ENCODE measurements at regions of chr17 and their contacts with region 1.

Region 1: GRCh38 chr17:61461967-61462718 is 9.9 kb downstream of the TBX4 start:
- DNase-seq: no peak
- H3K4me3 ChIP-seq: peak overlapping the region; percentile 31
- H3K27ac ChIP-seq: no peak overlapping the region
- H3K4me1 ChIP-seq: peaks cover 4% of the 10 kb centered on the region
- H3K27me3 ChIP-seq: peaks cover 25% of the 10 kb centered on the region
- CTCF ChIP-seq: no peak

Region 2: GRCh38 chr17:60398227-60398959 is 1063.8 kb before region 1 on chr17:
- CTCF ChIA-PET with region 1: no interaction called
- POLR2A ChIA-PET with region 1: interaction called, 10 read pairs
- intact Hi-C with region 1: no loop called
- DNase-seq: no peak
- H3K4me3 ChIP-seq: no peak overlapping the region
- H3K27ac ChIP-seq: no peak overlapping the region
- H3K4me1 ChIP-seq: peaks cover 15% of the 10 kb centered on the region
- H3K27me3 ChIP-seq: no peaks in the 10 kb centered on the region
- CTCF ChIP-seq: no peak

Region 3: DNA sequence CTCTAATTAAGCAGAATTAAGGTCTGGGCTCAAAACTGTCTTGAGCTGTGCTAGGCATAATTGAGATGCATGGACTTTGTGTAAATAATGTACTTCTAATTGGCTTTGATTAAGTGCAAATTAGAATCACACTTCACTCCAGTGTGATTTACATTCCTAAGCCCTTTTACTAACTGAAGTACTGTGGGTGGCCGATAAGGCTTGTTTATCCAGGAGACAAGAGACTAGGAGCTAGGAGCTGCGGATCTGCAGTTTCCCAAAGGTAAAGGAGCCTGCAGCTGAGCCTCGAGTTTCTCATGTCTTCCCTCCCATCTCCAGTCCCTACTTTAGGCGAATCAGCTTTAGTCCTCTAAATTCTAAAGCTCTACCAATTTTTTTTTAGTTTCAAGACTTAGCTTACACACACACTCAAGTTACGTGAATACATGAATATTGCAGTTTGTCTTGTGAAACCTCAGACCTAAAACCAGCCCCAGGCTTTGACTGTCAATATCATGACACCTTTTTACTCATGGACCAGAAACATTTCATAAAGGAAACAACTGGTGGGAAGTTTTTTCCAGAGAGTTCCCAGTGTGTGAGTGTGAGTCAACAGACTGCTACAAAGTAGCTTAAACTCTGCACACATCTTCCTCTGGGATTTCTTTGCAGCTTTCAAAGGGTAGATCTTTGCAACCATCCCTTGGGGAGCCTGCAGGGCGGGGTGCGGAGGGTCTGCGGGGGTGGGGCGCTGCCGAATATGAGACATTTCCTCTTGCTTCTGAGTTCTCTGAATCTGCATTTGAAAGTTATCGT is 176.4 kb before region 1 on chr17:
- CTCF ChIA-PET with region 1: no interaction called
- POLR2A ChIA-PET with region 1: no interaction called
- intact Hi-C with region 1: no loop called
- DNase-seq: no peak
- H3K4me3 ChIP-seq: no peak overlapping the region
- H3K27ac ChIP-seq: no peak overlapping the region
- H3K4me1 ChIP-seq: no peaks in the 10 kb centered on the region
- H3K27me3 ChIP-seq: no peaks in the 10 kb centered on the region
- CTCF ChIP-seq: no peak

Measured in A673 (cell line).